ENCODE measurements at regions of chr22 and their contacts with region 1.

Region 1: GRCh38 chr22:40346178-40347118 is at the start of gene ADSL:
- DNase-seq: peak; percentile 94
- H3K4me3 ChIP-seq: peak within 1 kb of the TSS; percentile 81
- H3K27ac ChIP-seq: peak within 1 kb of the TSS; percentile 86
- H3K4me1 ChIP-seq: peaks cover 13% of the 10 kb centered on the region
- H3K27me3 ChIP-seq: no peaks in the 10 kb centered on the region
- CTCF ChIP-seq: no peak
- total RNA-seq, gene ADSL: 133 and 144 TPM in 2 replicates

Region 2: DNA sequence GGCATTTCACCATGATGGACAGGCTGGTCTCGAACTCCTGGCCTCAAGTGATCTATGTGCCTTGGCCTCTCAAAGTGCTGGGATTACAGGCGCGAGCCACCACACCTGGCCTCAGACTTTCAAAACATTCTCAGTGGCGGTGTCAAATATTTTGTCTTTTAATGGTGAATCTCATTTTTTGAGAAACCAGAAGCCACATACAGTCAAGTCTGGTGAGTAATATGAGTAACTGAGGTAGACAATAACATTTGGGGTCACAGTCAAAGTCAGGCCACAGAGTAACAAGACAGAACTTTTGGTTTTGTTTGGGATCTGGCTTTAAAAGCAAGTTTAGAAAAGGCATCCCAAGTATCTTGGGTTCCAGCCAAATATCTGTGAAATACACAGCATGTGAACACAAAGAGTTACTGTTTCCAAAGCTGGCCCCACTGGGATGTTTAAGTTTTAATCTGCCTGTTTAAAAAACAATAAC is 391.8 kb before region 1 on chr22:
- CTCF ChIA-PET with region 1: no interaction called
- POLR2A ChIA-PET with region 1: no interaction called
- intact Hi-C with region 1: loop called (anchors 5 kb)
- DNase-seq: peak; percentile 58
- H3K4me3 ChIP-seq: no peak overlapping the region
- H3K27ac ChIP-seq: no peak overlapping the region
- H3K4me1 ChIP-seq: no peaks in the 10 kb centered on the region
- H3K27me3 ChIP-seq: no peaks in the 10 kb centered on the region
- CTCF ChIP-seq: no peak

Region 3: GRCh38 chr22:40084246-40084645 is 262.2 kb before region 1 on chr22:
- CTCF ChIA-PET with region 1: no interaction called
- POLR2A ChIA-PET with region 1: no interaction called
- intact Hi-C with region 1: no loop called
- DNase-seq: no peak
- H3K4me3 ChIP-seq: no peak overlapping the region
- H3K27ac ChIP-seq: no peak overlapping the region
- H3K4me1 ChIP-seq: peaks cover 5% of the 10 kb centered on the region
- H3K27me3 ChIP-seq: peaks cover 8% of the 10 kb centered on the region
- CTCF ChIP-seq: no peak

Measured in A673 (cell line).